Right ventricle myocardium inferior (tissue), 1 donor: ENCODE measurements at regions of chr10 and their contacts with region 1.

Region 1: DNA sequence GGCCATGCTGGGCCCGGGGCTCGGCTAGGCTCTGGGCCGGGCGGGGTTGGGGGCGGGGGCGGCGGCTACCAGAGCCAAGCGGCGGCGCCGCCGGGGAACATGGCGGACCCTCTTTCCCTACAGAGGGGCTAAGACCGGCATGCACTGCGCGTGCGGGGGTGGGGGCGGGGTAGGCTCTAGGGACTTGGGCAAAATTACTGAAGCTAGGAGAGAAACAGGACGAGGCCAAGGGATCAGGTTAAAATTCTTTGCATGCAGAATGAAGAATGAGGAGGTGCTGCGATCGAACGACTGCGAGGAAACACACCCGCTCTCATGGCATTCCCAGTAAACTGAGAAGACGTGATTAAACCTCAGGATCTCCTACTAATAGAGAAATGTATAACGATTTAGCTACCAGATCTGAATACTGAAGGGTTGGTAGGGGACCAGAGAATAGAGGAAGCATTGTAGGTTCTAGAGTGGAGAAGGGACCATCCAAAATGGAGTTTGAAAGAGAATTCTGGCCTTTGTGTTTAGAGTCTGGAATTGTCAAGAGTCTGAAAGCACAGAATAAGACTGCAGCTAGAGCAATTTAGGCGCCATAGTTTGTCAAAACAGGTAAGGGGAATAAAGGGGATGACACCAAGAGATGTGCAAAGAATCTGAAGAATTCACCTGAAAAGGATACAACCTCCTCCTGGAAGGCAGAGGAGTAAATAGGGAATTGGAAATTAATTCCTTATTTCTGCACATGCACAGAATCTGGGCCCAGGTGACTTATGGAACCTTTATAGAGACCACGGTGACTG is at the start of gene PPP3CB:
- DNase-seq: peak; percentile 95
- ATAC-seq: peak; percentile 92
- total RNA-seq, gene PPP3CB: 62.9 TPM

Region 2: GRCh38 chr10:73110345-73110849 is 385.7 kb before region 1 on chr10 and contains the start of gene NUDT13:
- intact Hi-C with region 1: no loop called
- DNase-seq: no peak
- ATAC-seq: peak; percentile 97
- total RNA-seq, gene NUDT13: 3.6 TPM

Region 3: GRCh38 chr10:73252445-73253224 is 243.4 kb before region 1 on chr10 and contains the start of gene MRPS16:
- intact Hi-C with region 1: loop called (anchors 5 kb)
- DNase-seq: peak; percentile 95
- ATAC-seq: peak; percentile 99
- total RNA-seq, gene MRPS16: 106 TPM

Region 4: GRCh38 chr10:74084955-74085354 is 588.9 kb after region 1 on chr10:
- intact Hi-C with region 1: no loop called
- DNase-seq: no peak
- ATAC-seq: no peak